ENCODE measurements at regions of chr19 and their contacts with region 1.

Region 1: DNA sequence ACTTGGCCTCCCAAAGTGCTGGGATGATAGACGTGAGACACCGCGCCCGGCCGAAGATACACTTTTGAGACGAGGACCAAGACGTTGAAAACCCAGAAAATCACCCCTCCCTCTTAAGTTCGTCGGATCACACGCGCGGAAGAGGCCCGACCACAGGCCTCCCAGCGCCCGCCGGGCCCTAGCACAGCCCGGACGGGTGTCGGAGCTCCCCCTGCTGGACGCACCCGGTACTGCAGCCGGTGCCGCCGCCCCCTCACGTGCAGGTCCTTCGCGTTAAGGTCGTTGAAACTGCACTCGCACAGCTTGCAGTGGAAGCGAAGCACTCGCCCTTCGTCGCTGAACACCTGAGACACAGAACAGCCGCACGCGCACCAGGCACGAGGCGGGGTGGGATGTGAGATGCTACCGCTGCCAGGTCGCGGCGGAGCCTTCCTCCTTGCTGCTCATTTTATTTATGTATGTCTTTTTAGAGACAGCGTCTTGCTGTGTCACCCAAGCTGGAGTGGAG is 35.7 kb upstream of the MATK start:
- DNase-seq: no peak
- H3K4me3 ChIP-seq: no peak overlapping the region
- CTCF ChIP-seq: peak; percentile 98

Region 2: GRCh38 chr19:3710265-3710812 is 111.6 kb before region 1 on chr19:
- CTCF ChIA-PET with region 1: no interaction called
- POLR2A ChIA-PET with region 1: no interaction called
- DNase-seq: no peak
- H3K4me3 ChIP-seq: no peak overlapping the region
- CTCF ChIP-seq: no peak

Region 3: GRCh38 chr19:3796358-3796757 is 25.6 kb before region 1 on chr19:
- CTCF ChIA-PET with region 1: interaction called, 10 read pairs
- POLR2A ChIA-PET with region 1: no interaction called
- DNase-seq: no peak
- H3K4me3 ChIP-seq: no peak overlapping the region
- CTCF ChIP-seq: no peak

Region 4: DNA sequence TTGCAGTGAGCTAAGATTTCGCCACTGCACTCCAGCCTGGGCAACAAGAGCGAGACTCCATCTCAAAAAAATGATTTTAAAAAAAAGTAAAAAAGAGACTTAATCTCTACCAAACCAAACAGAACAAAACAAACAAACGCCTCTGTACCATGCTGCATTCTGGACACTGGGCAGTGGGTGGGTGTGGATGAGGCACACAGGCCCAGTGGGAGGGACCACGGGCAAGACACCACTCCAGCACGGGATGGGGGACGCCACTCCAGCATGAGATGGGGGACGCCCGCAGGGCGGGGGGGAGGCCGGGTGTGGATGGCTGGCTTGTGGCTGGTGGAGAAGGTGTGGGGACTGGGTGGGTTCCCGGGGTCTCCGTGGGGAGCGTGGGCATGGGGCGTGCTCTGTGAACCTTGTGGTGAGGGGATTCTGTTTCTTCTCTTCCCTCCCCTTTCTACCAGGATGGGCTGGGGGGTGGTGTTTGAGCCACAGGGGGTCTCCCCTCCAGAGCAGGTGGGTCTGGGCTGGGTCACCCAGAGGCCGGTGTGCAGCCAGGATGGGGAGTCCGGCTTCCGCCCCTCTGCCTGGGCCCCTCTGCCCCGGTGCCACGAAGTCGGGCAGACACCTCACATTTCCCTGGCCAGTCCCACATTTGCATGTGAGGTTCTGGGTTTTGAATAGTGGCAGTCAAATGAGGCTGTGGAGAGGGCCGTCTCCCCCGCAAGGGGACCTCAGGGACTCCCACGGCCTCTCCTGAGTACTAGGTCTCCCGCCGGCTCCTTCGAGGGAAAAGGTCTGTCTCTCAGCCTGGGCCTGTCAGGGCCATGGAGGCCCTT is 11.8 kb before region 1 on chr19:
- CTCF ChIA-PET with region 1: interaction called, 17 read pairs
- POLR2A ChIA-PET with region 1: no interaction called
- DNase-seq: no peak
- H3K4me3 ChIP-seq: no peak overlapping the region
- CTCF ChIP-seq: no peak

Region 5: GRCh38 chr19:3836887-3837286 is 15.0 kb after region 1 on chr19:
- CTCF ChIA-PET with region 1: interaction called, 25 read pairs
- POLR2A ChIA-PET with region 1: no interaction called
- DNase-seq: no peak
- H3K4me3 ChIP-seq: no peak overlapping the region
- CTCF ChIP-seq: no peak

Region 6: DNA sequence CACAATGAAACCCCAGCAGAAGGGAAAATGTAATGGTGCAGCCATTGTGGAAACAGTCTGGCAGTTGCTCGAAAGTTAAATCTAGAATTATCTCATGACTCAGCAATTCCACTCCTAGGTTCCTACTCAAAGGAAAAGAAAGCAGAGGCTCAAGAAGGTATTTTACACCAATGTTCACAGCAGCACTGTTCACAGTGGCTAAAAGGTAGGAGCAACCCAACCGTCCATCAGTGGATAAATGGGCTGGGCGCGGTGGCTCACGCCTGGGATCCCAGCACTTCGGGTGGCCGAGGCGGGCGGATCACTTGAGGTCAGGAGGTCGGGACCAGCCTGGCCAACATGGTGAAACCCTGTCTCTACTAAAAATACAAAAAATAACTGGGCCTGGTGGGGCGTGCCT is 21.0 kb after region 1 on chr19:
- CTCF ChIA-PET with region 1: interaction called, 10 read pairs
- POLR2A ChIA-PET with region 1: no interaction called
- DNase-seq: no peak
- H3K4me3 ChIP-seq: no peak overlapping the region
- CTCF ChIP-seq: no peak

Region 7: DNA sequence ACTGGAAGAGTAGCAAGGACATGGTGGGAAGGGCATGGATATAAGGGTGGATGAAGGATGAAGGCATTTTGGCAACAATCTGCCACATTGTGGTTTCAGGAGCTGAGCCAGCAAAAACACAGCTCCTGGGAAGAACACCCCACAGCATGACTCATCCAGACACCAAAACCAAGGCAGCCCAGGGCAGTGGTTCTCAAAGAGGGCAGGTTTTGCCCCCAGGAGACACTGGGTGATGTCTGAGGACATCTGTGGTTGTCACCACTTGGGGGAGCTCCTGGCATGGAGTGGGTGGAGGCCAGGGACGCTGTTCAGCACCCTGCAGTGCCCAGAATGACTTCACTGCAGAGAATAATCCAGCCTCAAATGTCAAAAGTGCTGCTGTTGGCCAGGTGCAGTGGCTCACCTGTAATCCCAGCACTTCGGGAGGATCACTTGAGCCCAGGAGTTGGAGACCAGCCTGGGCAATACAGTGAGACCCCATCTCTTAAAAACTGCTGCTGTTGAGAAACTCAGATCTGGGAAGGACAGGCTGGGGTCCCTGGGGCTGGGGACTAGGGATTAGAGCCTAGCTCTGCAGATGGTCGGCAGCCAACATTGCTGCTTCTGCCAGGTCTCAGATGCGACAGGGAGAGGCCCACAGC is 30.8 kb after region 1 on chr19:
- CTCF ChIA-PET with region 1: interaction called, 10 read pairs
- POLR2A ChIA-PET with region 1: no interaction called
- DNase-seq: peak; percentile 17
- H3K4me3 ChIP-seq: no peak overlapping the region
- CTCF ChIP-seq: peak; percentile 29

Region 8: GRCh38 chr19:3899531-3900292 is 77.8 kb after region 1 on chr19:
- CTCF ChIA-PET with region 1: no interaction called
- POLR2A ChIA-PET with region 1: no interaction called
- DNase-seq: no peak
- H3K4me3 ChIP-seq: no peak overlapping the region
- CTCF ChIP-seq: no peak

Region 9: GRCh38 chr19:3910105-3910504 is 88.2 kb after region 1 on chr19:
- CTCF ChIA-PET with region 1: no interaction called
- POLR2A ChIA-PET with region 1: no interaction called
- DNase-seq: no peak
- H3K4me3 ChIP-seq: no peak overlapping the region
- CTCF ChIP-seq: no peak

Region 10: GRCh38 chr19:3923912-3924311 is 102.0 kb after region 1 on chr19:
- CTCF ChIA-PET with region 1: no interaction called
- POLR2A ChIA-PET with region 1: no interaction called
- DNase-seq: no peak
- H3K4me3 ChIP-seq: no peak overlapping the region
- CTCF ChIP-seq: no peak